WTC11 (cell line): ENCODE measurements at regions of chr20 and their contacts with region 1.

Region 1: GRCh38 chr20:577167-577791 is 32.8 kb downstream of the TCF15 start:
- DNase-seq: no peak
- ATAC-seq: peak; percentile 43
- H3K4me3 Mint-ChIP-seq: no peak overlapping the region
- H3K27ac Mint-ChIP-seq: no peak overlapping the region; the same call in 1 of the 2 replicates
- H3K4me1 Mint-ChIP-seq: peaks cover 41% of the 10 kb centered on the region
- H3K27me3 Mint-ChIP-seq: peaks cover 6% of the 10 kb centered on the region; the same call in 1 of the 2 replicates
- CTCF ChIP-seq: peak; percentile 26; the same call in 1 of the 2 replicates

Region 2: DNA sequence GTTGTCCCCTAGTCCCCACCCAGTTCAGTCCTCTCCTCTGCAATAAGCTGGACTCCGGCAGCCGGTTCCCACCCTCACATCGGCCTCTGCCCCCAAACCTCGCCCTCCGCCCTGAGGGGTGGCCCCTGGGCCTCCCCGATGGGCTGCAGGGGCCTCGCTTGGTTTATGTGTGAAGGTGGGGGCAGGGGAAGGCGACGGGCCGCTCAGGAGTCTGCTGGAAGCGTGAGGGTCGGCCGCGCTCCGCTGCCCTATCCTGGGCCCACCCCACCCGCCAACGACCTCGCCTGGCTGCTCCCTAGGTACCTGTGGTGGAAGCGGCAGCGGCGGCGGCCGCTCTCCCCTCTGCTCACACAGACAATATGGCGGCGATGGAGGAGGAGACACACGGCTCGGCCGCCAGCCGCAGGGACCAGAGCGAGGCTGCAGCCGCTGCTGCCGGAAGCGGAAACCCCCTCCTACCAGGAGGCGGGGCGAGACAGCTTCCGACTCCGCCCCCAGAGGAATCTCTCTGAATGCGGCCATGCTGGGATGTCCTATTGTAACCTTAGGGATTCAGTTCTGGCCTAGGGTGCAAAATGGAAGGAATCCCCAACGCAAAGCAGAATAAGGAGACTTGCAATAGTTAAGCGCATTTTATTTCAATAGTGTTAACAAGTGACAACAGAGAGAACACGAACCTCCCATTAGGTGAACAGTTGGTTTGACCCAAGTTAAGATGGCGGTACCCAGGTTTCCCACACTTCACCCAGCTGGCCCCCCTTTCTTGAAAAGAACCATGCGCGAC is 33.7 kb before region 1 on chr20 and contains the start of gene CSNK2A1:
- CTCF ChIA-PET with region 1: interaction called, 15 read pairs
- POLR2A ChIA-PET with region 1: interaction called, 4 read pairs
- DNase-seq: peak; percentile 96
- ATAC-seq: peak; percentile 93
- H3K4me3 Mint-ChIP-seq: peak within 1 kb of the TSS; percentile 87
- H3K27ac Mint-ChIP-seq: peak within 1 kb of the TSS; percentile 96
- H3K4me1 Mint-ChIP-seq: peaks cover 47% of the 10 kb centered on the region
- H3K27me3 Mint-ChIP-seq: peaks cover 38% of the 10 kb centered on the region
- CTCF ChIP-seq: no peak
- total RNA-seq, gene CSNK2A1: 235 to 244 TPM (median 236 TPM) in 3 replicates

Region 3: DNA sequence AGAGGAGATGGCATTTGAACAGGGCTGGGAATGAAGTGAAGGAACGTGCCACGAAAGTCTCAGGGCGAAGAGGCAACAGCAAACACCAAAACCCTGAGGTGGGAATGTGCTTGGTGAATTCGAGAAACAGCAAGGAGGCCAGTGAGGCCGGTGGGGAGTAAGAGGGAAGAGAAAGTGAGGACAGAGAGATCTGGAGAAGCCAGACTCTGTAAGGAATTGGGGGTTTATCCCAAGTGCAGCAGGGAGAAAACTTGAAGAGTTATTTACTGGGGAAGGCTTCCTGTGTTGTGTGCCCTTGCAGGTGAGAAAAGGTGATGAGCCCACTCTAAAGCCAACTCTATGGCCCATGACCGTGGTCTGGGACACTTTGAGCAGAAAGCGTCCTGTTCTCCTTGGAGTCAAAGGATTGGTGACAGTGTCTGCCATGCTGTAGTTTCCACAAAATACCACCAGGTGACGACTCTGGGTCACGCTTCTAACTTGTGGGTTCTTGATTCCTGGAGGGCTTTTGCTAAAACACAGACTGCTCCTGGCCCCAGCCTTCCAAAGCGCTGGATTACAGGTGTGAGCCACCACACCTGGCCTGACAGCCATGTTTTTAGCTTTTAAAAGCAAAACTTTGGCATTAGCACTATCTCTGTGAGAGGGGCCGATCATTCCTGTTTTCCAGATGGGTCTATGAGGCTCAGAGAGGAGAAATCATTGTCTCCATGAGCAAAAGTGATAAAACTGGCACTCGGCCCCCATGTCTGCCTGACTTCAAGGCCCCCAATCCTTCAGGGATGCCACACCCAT is 15.6 kb before region 1 on chr20:
- CTCF ChIA-PET with region 1: interaction called, 31 read pairs
- POLR2A ChIA-PET with region 1: no interaction called
- DNase-seq: peak; percentile 83
- ATAC-seq: peak; percentile 96
- H3K4me3 Mint-ChIP-seq: no peak overlapping the region
- H3K27ac Mint-ChIP-seq: no peak overlapping the region
- H3K4me1 Mint-ChIP-seq: no peaks in the 10 kb centered on the region
- H3K27me3 Mint-ChIP-seq: no peaks in the 10 kb centered on the region
- CTCF ChIP-seq: peak; percentile 88

Region 4: GRCh38 chr20:588932-589672 is 11.8 kb after region 1 on chr20:
- CTCF ChIA-PET with region 1: interaction called, 16 read pairs
- POLR2A ChIA-PET with region 1: interaction called, 3 read pairs
- DNase-seq: no peak
- ATAC-seq: peak; percentile 95
- H3K4me3 Mint-ChIP-seq: no peak overlapping the region
- H3K27ac Mint-ChIP-seq: no peak overlapping the region
- H3K4me1 Mint-ChIP-seq: no peaks in the 10 kb centered on the region
- H3K27me3 Mint-ChIP-seq: peaks cover 5% of the 10 kb centered on the region; the same call in 1 of the 2 replicates
- CTCF ChIP-seq: no peak